Natural killer cell (primary cell): ENCODE measurements at regions of chr10 and their contacts with region 1.

Region 1: GRCh38 chr10:68301790-68302502 is 29.9 kb upstream of the HNRNPH3 start:
- DNase-seq: peak in 1 of 2 donors; percentile 52
- ATAC-seq: peak in 1 of 3 donors; percentile 49
- H3K4me3 ChIP-seq: no peak overlapping the region
- H3K4me3 Mint-ChIP-seq: no peak overlapping the region
- H3K27ac ChIP-seq: no peak overlapping the region
- H3K27ac Mint-ChIP-seq: no peak overlapping the region
- H3K4me1 ChIP-seq: peaks cover 5% of the 10 kb centered on the region
- H3K4me1 Mint-ChIP-seq: no peaks in the 10 kb centered on the region
- H3K27me3 ChIP-seq: no peaks in the 10 kb centered on the region
- H3K27me3 Mint-ChIP-seq: no peaks in the 10 kb centered on the region
- CTCF ChIP-seq: peak; percentile 42

Region 2: DNA sequence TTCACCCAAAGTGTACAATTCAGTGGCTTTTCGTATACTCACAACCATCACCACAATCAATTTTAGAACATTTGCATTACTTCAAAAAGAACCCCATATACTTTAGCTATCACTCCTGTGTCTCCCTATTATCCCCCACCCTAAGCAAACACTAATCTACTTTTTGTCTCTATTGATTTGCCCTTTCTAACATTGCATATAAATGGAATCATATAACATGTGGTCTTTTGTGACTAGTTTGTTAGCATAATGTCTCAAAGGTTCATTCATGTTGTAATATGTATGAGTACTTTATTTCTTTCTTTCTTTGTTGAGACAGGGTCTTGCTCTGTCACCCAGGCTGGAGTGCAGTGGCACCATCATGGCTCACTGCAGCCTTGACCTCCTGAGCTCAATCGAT is 443.0 kb before region 1 on chr10:
- intact Hi-C with region 1: loop called (anchors 5 kb)
- DNase-seq: no peak
- ATAC-seq: no peak
- H3K4me3 ChIP-seq: no peak overlapping the region
- H3K4me3 Mint-ChIP-seq: no peak overlapping the region
- H3K27ac ChIP-seq: no peak overlapping the region
- H3K27ac Mint-ChIP-seq: no peak overlapping the region
- H3K4me1 ChIP-seq: peaks cover 2% of the 10 kb centered on the region
- H3K4me1 Mint-ChIP-seq: peaks cover 0 to 5% of the 10 kb centered on the region in 2 donors
- H3K27me3 ChIP-seq: no peaks in the 10 kb centered on the region
- H3K27me3 Mint-ChIP-seq: peaks cover 0 to 2% of the 10 kb centered on the region in 2 donors
- CTCF ChIP-seq: no peak

Region 3: GRCh38 chr10:68096913-68097503 is 204.9 kb before region 1 on chr10:
- intact Hi-C with region 1: no loop called
- DNase-seq: no peak
- ATAC-seq: no peak
- H3K4me3 ChIP-seq: no peak overlapping the region
- H3K4me3 Mint-ChIP-seq: no peak overlapping the region
- H3K27ac ChIP-seq: no peak overlapping the region
- H3K27ac Mint-ChIP-seq: no peak overlapping the region
- H3K4me1 ChIP-seq: no peaks in the 10 kb centered on the region
- H3K4me1 Mint-ChIP-seq: peaks cover 0 to 5% of the 10 kb centered on the region in 2 donors
- H3K27me3 ChIP-seq: no peaks in the 10 kb centered on the region
- H3K27me3 Mint-ChIP-seq: peaks cover 4 to 6% of the 10 kb centered on the region in 2 donors
- CTCF ChIP-seq: no peak

Region 4: GRCh38 chr10:68331455-68332258 is 29.7 kb after region 1 on chr10 and contains the start of gene HNRNPH3:
- intact Hi-C with region 1: no loop called
- DNase-seq: peak; percentile 97 to 100
- ATAC-seq: peak; percentile 83 to 94 (median 85)
- H3K4me3 ChIP-seq: peak within 1 kb of the TSS; percentile 97
- H3K4me3 Mint-ChIP-seq: peak within 1 kb of the TSS; percentile 98
- H3K27ac ChIP-seq: peak within 1 kb of the TSS; percentile 95
- H3K27ac Mint-ChIP-seq: peak within 1 kb of the TSS; percentile 97 to 99
- H3K4me1 ChIP-seq: peaks cover 11% of the 10 kb centered on the region
- H3K4me1 Mint-ChIP-seq: peaks cover 54 to 55% of the 10 kb centered on the region in 2 donors
- H3K27me3 ChIP-seq: no peaks in the 10 kb centered on the region
- H3K27me3 Mint-ChIP-seq: no peaks in the 10 kb centered on the region
- CTCF ChIP-seq: no peak
- total RNA-seq, gene HNRNPH3: 132 to 162 (median 142) TPM